Endothelial cell of umbilical vein (primary cell): ENCODE measurements at regions of chr9 and their contacts with region 1.

Region 1: GRCh38 chr9:18442629-18443491 is 31.1 kb upstream of the ADAMTSL1 start:
- DNase-seq: peak; percentile 87
- H3K4me3 ChIP-seq: no peak overlapping the region
- H3K27ac ChIP-seq: no peak overlapping the region
- H3K4me1 ChIP-seq: peaks cover 24% of the 10 kb centered on the region
- H3K27me3 ChIP-seq: no peaks in the 10 kb centered on the region
- CTCF ChIP-seq: peak; percentile 87 to 97
- POLR2A ChIP-seq: no peak

Region 2: GRCh38 chr9:18255158-18255629 is 187.7 kb before region 1 on chr9:
- CTCF ChIA-PET with region 1: interaction called, 188 read pairs
- POLR2A ChIA-PET with region 1: interaction called, 4 read pairs
- dilution Hi-C with region 1: loop called (anchors 25 kb)
- intact Hi-C with region 1: loop called (anchors 1 kb)
- DNase-seq: peak; percentile 84
- H3K4me3 ChIP-seq: no peak overlapping the region
- H3K27ac ChIP-seq: no peak overlapping the region
- H3K4me1 ChIP-seq: peaks cover 2% of the 10 kb centered on the region
- H3K27me3 ChIP-seq: no peaks in the 10 kb centered on the region
- CTCF ChIP-seq: peak; percentile 76 to 81
- POLR2A ChIP-seq: no peak

Region 3: DNA sequence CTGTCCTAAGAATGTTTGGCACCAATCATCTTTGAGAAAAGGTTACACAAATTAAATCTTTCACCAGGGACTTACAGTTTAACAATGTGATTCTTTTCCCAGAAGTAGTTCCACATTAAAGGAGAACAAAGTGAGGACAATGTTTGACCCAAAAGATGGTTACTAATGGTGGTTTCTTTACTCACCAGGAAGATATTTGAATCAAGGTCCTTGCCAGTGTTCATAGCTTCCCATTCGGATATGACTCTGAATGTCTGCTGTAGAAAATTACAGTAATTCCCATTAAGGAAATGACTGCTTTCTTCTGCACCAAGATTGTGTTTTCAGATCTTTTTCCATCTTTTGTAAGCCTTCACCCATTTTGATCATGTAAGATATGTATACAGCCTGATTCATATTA is 83.5 kb before region 1 on chr9:
- CTCF ChIA-PET with region 1: interaction called, 25 read pairs
- POLR2A ChIA-PET with region 1: no interaction called
- dilution Hi-C with region 1: no loop called
- intact Hi-C with region 1: loop called (anchors 1 kb)
- DNase-seq: peak; percentile 92
- H3K4me3 ChIP-seq: peak overlapping the region in 1 of 3 experiments; percentile 59
- H3K27ac ChIP-seq: peak overlapping the region; percentile 100
- H3K4me1 ChIP-seq: peaks cover 31% of the 10 kb centered on the region
- H3K27me3 ChIP-seq: no peaks in the 10 kb centered on the region
- CTCF ChIP-seq: no peak
- POLR2A ChIP-seq: no peak

Region 4: DNA sequence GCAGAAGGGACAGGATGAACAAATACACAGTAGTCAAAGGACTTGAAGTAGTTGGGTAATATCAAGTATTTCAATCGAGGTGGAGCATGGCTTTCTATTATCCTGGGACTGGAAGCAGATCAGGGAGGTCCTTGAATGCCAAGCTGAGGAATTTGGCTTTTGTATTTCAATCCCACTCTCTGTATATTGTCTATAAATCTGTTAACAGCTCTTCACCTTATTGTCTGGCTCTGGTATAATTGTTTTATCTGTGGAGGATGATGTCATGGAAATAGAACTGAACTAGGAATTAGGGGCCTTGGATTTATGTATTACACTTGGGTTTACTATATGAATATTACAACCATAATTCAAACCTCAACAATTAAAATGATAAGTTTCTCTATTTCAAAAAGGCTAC is 24.8 kb after region 1 on chr9:
- CTCF ChIA-PET with region 1: interaction called, 62 read pairs
- POLR2A ChIA-PET with region 1: no interaction called
- dilution Hi-C with region 1: no loop called
- intact Hi-C with region 1: no loop called
- DNase-seq: no peak
- H3K4me3 ChIP-seq: no peak overlapping the region
- H3K27ac ChIP-seq: no peak overlapping the region
- H3K4me1 ChIP-seq: peaks cover 14% of the 10 kb centered on the region
- H3K27me3 ChIP-seq: no peaks in the 10 kb centered on the region
- CTCF ChIP-seq: no peak
- POLR2A ChIP-seq: no peak

Region 5: GRCh38 chr9:18545636-18546360 is 102.9 kb after region 1 on chr9:
- CTCF ChIA-PET with region 1: interaction called, 4 read pairs
- POLR2A ChIA-PET with region 1: no interaction called
- dilution Hi-C with region 1: no loop called
- intact Hi-C with region 1: loop called (anchors 5 kb)
- DNase-seq: no peak
- H3K4me3 ChIP-seq: no peak overlapping the region
- H3K27ac ChIP-seq: no peak overlapping the region
- H3K4me1 ChIP-seq: peaks cover 22% of the 10 kb centered on the region
- H3K27me3 ChIP-seq: no peaks in the 10 kb centered on the region
- CTCF ChIP-seq: no peak
- POLR2A ChIP-seq: no peak

Region 6: GRCh38 chr9:19018201-19018600 is 575.3 kb after region 1 on chr9:
- CTCF ChIA-PET with region 1: interaction called, 7 read pairs
- POLR2A ChIA-PET with region 1: no interaction called
- dilution Hi-C with region 1: no loop called
- intact Hi-C with region 1: loop called (anchors 1 kb)
- DNase-seq: no peak
- H3K4me3 ChIP-seq: no peak overlapping the region
- H3K27ac ChIP-seq: no peak overlapping the region
- H3K4me1 ChIP-seq: no peaks in the 10 kb centered on the region
- H3K27me3 ChIP-seq: no peaks in the 10 kb centered on the region
- CTCF ChIP-seq: no peak
- POLR2A ChIP-seq: no peak